CD4-positive, alpha-beta T cell (primary cell): ENCODE measurements at regions of chr11 and their contacts with region 1.

Region 1: DNA sequence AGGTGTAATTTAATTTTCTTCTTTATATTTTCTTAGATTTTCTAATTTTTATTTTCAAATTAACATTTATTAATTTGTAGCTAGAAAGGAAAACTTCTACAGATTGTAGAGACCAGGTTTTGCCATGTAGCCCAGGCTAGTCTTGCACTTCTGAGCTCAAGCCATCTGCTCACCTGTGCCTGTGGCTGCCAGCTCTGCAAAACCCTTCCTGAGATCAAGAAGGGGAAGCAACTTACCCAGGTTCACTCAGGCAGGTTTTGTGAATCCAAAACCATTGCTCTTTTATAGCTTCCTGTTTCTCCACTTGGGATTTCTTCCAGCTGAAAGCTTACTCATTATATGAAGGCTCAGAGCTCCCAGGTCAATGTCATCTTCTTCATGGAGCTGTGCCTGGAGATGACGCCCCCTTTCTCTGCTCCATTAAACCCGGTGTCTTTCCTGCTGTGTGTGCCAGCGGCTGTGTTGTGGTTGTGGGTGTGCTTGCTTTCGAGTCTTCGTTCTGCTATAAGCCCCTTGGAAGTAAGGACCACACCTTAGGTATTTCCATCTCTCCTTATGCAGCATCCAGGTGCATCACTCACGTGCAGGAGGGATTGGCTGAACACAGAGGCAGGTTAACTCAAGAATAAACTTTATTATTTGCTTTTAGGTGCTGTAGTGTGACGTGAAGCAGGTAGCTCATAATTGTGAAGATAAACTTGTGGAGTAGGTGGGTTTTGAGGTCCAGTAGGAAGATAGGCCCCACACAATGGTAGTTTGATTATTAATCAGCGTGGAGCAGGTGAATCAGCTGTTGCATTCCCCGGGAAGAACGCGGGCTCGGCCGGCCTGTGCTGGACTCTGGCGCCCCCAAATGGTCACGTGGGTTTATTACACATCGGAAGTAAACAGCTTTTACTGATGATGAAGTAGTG is 42.2 kb upstream of the INCENP start:
- DNase-seq: peak; percentile 66 to 89 (median 80)
- ATAC-seq: peak; percentile 93
- H3K4me3 ChIP-seq: no peak overlapping the region
- H3K4me3 Mint-ChIP-seq: peak overlapping the region; percentile 2
- H3K27ac ChIP-seq: no peak overlapping the region
- H3K27ac Mint-ChIP-seq: no peak overlapping the region
- H3K4me1 ChIP-seq: peaks cover 9% of the 10 kb centered on the region
- H3K4me1 Mint-ChIP-seq: peaks cover 8% of the 10 kb centered on the region
- H3K27me3 ChIP-seq: no peaks in the 10 kb centered on the region
- H3K27me3 Mint-ChIP-seq: no peaks in the 10 kb centered on the region
- CTCF ChIP-seq: peak; percentile 96

Region 2: DNA sequence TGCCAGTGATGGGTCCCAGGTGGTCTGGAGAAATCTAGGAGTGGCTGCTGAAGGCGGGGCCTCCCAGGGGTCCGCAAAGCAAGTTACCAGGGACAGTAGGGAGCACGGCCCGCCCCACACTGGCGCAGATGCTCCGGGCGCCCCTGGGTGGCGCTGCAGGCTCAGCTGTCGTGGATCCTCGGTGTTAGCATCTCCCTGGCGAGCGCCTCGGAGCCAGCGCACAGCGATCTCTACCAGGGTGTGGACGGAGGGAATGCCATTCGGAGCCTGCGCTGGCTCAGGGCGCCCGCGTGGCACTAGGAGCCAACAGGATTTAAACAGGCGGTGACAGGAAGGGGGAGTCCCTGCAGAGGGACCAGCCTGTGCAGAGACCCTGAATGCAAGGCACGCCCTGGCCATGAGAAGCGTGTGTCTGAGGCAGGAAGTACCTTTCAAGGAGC is 210.5 kb before region 1 on chr11:
- CTCF ChIA-PET with region 1: interaction called, 19 read pairs
- POLR2A ChIA-PET with region 1: no interaction called
- intact Hi-C with region 1: no loop called
- DNase-seq: peak; percentile 38 to 79 (median 50)
- ATAC-seq: peak; percentile 97
- H3K4me3 ChIP-seq: no peak overlapping the region
- H3K4me3 Mint-ChIP-seq: peak overlapping the region; percentile 13
- H3K27ac ChIP-seq: no peak overlapping the region
- H3K27ac Mint-ChIP-seq: no peak overlapping the region
- H3K4me1 ChIP-seq: peaks cover 7% of the 10 kb centered on the region
- H3K4me1 Mint-ChIP-seq: peaks cover 5% of the 10 kb centered on the region
- H3K27me3 ChIP-seq: no peaks in the 10 kb centered on the region
- H3K27me3 Mint-ChIP-seq: peaks cover 7% of the 10 kb centered on the region
- CTCF ChIP-seq: peak; percentile 57

Region 3: DNA sequence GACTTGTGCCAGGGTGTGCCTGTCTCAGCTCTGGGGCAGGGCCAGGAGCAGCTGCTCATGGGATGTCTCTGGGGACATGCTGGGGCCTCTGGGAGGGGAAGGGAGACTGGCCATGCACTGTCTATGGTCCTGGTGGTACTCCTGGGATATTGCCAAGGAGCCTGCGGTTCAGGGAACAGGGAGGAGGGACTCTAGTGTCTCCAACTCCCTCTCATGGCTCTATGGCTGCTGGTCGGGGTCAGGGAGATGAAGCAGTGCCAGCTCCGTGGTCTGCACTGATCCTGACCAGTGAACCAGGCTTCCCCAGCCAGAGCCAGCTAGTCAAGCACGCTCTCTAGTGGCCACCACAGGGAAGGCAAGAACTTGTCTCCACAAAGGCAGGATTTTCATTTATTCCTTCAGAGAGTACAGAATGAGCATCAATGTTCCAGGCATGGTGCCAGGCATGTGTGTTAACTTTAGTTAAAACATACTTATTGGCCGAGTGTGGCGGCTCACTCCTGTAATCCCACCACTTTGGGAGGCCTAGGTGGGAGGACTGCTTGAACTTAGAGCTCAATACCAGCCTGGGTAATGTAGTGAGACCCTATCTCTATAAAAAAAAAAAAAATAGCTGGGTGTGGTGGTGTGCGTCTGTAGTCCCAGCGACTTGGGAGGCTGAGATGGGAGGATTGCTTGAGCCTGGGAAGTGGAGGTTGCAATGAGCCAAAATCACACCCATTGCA is 134.0 kb before region 1 on chr11:
- CTCF ChIA-PET with region 1: interaction called, 73 read pairs
- POLR2A ChIA-PET with region 1: interaction called, 7 read pairs
- intact Hi-C with region 1: loop called (anchors 1 to 2 kb)
- DNase-seq: peak; percentile 42 to 81 (median 58)
- ATAC-seq: peak; percentile 87
- H3K4me3 ChIP-seq: no peak overlapping the region
- H3K4me3 Mint-ChIP-seq: no peak overlapping the region
- H3K27ac ChIP-seq: no peak overlapping the region
- H3K27ac Mint-ChIP-seq: no peak overlapping the region
- H3K4me1 ChIP-seq: peaks cover 8% of the 10 kb centered on the region
- H3K4me1 Mint-ChIP-seq: no peaks in the 10 kb centered on the region
- H3K27me3 ChIP-seq: peaks cover 0 to 3% of the 10 kb centered on the region in 2 experiments
- H3K27me3 Mint-ChIP-seq: peaks cover 16% of the 10 kb centered on the region
- CTCF ChIP-seq: peak; percentile 70

Region 4: GRCh38 chr11:62025487-62026105 is 56.0 kb before region 1 on chr11:
- CTCF ChIA-PET with region 1: interaction called, 22 read pairs
- POLR2A ChIA-PET with region 1: interaction called, 22 read pairs
- intact Hi-C with region 1: loop called in 1 of 2 experiments (anchors 1 kb)
- DNase-seq: peak; percentile 45 to 98 (median 72)
- ATAC-seq: peak; percentile 84
- H3K4me3 ChIP-seq: peak overlapping the region; percentile 9
- H3K4me3 Mint-ChIP-seq: peak overlapping the region; percentile 43
- H3K27ac ChIP-seq: peak overlapping the region; percentile 85 to 98
- H3K27ac Mint-ChIP-seq: peak overlapping the region; percentile 95
- H3K4me1 ChIP-seq: peaks cover 33% of the 10 kb centered on the region
- H3K4me1 Mint-ChIP-seq: peaks cover 29% of the 10 kb centered on the region
- H3K27me3 ChIP-seq: no peaks in the 10 kb centered on the region
- H3K27me3 Mint-ChIP-seq: no peaks in the 10 kb centered on the region
- CTCF ChIP-seq: no peak

Region 5: GRCh38 chr11:62044639-62045121 is 37.0 kb before region 1 on chr11:
- CTCF ChIA-PET with region 1: interaction called, 10 read pairs
- POLR2A ChIA-PET with region 1: no interaction called
- intact Hi-C with region 1: no loop called
- DNase-seq: no peak
- ATAC-seq: no peak
- H3K4me3 ChIP-seq: no peak overlapping the region
- H3K4me3 Mint-ChIP-seq: no peak overlapping the region
- H3K27ac ChIP-seq: no peak overlapping the region
- H3K27ac Mint-ChIP-seq: no peak overlapping the region
- H3K4me1 ChIP-seq: no peaks in the 10 kb centered on the region
- H3K4me1 Mint-ChIP-seq: no peaks in the 10 kb centered on the region
- H3K27me3 ChIP-seq: no peaks in the 10 kb centered on the region
- H3K27me3 Mint-ChIP-seq: peaks cover 8% of the 10 kb centered on the region
- CTCF ChIP-seq: no peak

Region 6: GRCh38 chr11:62071408-62071807 is 10.2 kb before region 1 on chr11:
- CTCF ChIA-PET with region 1: interaction called, 12 read pairs
- POLR2A ChIA-PET with region 1: no interaction called
- intact Hi-C with region 1: no loop called
- DNase-seq: no peak
- ATAC-seq: no peak
- H3K4me3 ChIP-seq: no peak overlapping the region
- H3K4me3 Mint-ChIP-seq: no peak overlapping the region
- H3K27ac ChIP-seq: no peak overlapping the region
- H3K27ac Mint-ChIP-seq: no peak overlapping the region
- H3K4me1 ChIP-seq: no peaks in the 10 kb centered on the region
- H3K4me1 Mint-ChIP-seq: no peaks in the 10 kb centered on the region
- H3K27me3 ChIP-seq: no peaks in the 10 kb centered on the region
- H3K27me3 Mint-ChIP-seq: peaks cover 3% of the 10 kb centered on the region
- CTCF ChIP-seq: no peak

Region 7: DNA sequence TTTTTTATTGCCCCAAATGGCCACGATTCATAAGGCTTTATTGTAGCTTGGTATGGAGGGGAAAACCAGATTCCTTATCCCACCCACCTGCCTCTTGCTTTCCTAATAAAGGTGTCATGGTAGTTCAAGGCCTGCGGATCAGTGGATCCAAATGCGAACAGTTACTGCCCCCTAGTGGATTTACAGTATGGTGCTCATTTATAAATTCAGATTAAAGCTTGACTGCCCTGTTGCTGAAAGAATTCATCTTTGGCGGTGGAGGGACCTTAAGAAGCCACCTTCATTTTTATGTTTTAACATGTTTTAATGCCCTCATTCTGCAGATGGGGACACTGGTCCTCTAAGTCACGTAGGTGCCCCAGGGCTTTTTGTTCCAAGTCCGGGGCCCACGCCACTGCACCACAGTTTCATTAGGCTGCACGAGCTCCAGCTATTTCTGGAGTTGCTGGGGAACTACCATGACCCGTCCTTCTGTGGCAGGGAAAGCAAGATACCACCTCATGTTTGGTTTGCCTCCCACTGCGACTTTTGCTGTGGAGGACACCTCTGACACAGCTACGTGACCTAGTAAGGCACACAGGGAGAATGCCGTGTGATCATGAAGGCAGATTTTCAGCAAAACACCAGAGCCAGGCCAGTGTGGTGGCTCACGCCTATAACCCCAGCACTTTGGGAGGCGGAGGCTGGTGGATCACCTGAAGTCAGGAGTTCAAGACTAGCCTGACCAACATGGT is 26.5 kb after region 1 on chr11:
- CTCF ChIA-PET with region 1: interaction called, 50 read pairs
- POLR2A ChIA-PET with region 1: interaction called, 11 read pairs
- intact Hi-C with region 1: no loop called
- DNase-seq: peak in 8 of 14 experiments; percentile 19 to 82 (median 42)
- ATAC-seq: peak; percentile 62
- H3K4me3 ChIP-seq: no peak overlapping the region
- H3K4me3 Mint-ChIP-seq: peak overlapping the region; percentile 52
- H3K27ac ChIP-seq: no peak overlapping the region
- H3K27ac Mint-ChIP-seq: no peak overlapping the region
- H3K4me1 ChIP-seq: peaks cover 26% of the 10 kb centered on the region
- H3K4me1 Mint-ChIP-seq: peaks cover 11% of the 10 kb centered on the region
- H3K27me3 ChIP-seq: no peaks in the 10 kb centered on the region
- H3K27me3 Mint-ChIP-seq: no peaks in the 10 kb centered on the region
- CTCF ChIP-seq: peak; percentile 85